Testis (tissue), 5 donors: ENCODE measurements at regions of chr4 and their contacts with region 1.

Region 1: DNA sequence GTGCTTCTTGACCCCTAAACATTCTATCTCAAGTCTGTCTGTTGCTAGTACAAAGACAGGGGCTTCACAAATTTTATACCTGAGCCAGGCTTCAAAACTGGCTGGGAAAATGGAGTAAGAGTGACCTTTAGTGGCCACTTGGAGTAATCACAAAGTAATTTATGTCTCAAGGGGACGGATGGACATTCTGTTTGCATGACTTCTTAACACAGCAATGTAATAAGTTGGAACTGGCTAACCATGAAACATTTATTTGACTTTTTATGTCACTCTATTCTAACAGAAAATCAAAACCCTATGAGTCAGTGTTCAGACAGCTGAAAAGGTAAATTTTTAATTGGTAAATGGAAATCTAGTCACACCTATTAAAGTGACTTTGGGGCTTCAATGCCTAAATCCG is 600.6 kb downstream of the ANKRD50 start:
- DNase-seq: peak; percentile 21
- H3K4me3 ChIP-seq: no peak overlapping the region
- H3K27ac ChIP-seq: no peak overlapping the region
- H3K4me1 ChIP-seq: no peaks in the 10 kb centered on the region
- H3K27me3 ChIP-seq: no peaks in the 10 kb centered on the region
- CTCF ChIP-seq: peak; percentile 47 to 62 (median 48)
- POLR2A ChIP-seq: no peak

Region 2: DNA sequence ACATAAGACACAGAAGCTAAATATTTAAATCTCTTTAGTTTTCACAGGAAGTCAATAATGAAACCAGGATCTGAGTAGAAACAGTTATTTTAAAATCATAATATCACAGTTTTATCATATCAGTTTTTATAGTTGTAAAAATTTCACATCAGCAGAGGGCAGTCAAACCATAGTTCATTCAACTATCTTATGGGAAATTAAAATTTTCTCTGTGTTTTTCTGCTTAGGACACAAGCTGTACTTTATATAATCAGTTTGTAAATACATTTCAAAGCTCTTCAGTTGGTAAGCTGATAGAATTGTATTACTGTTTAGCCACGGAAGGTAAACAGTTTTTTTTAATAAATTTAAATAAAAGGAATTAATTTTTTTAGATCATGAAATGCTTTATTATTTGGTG is 984.7 kb before region 1 on chr4:
- intact Hi-C with region 1: loop called (anchors 5 kb)
- DNase-seq: no peak
- H3K4me3 ChIP-seq: no peak overlapping the region
- H3K27ac ChIP-seq: no peak overlapping the region
- H3K4me1 ChIP-seq: no peaks in the 10 kb centered on the region
- H3K27me3 ChIP-seq: no peaks in the 10 kb centered on the region
- CTCF ChIP-seq: peak in 1 of 3 experiments; percentile 35
- POLR2A ChIP-seq: no peak

Region 3: GRCh38 chr4:123869286-123870060 is 242.4 kb before region 1 on chr4:
- intact Hi-C with region 1: no loop called
- DNase-seq: no peak
- H3K4me3 ChIP-seq: no peak overlapping the region
- H3K27ac ChIP-seq: no peak overlapping the region
- H3K4me1 ChIP-seq: no peaks in the 10 kb centered on the region
- H3K27me3 ChIP-seq: no peaks in the 10 kb centered on the region
- CTCF ChIP-seq: no peak
- POLR2A ChIP-seq: no peak

Region 4: GRCh38 chr4:124290669-124291068 is 178.7 kb after region 1 on chr4:
- intact Hi-C with region 1: no loop called
- DNase-seq: no peak
- H3K4me3 ChIP-seq: no peak overlapping the region
- H3K27ac ChIP-seq: no peak overlapping the region
- H3K4me1 ChIP-seq: no peaks in the 10 kb centered on the region
- H3K27me3 ChIP-seq: no peaks in the 10 kb centered on the region
- CTCF ChIP-seq: no peak
- POLR2A ChIP-seq: no peak